MCF 10A (cell line): ENCODE measurements at regions of chr2 and their contacts with region 1.

Region 1: DNA sequence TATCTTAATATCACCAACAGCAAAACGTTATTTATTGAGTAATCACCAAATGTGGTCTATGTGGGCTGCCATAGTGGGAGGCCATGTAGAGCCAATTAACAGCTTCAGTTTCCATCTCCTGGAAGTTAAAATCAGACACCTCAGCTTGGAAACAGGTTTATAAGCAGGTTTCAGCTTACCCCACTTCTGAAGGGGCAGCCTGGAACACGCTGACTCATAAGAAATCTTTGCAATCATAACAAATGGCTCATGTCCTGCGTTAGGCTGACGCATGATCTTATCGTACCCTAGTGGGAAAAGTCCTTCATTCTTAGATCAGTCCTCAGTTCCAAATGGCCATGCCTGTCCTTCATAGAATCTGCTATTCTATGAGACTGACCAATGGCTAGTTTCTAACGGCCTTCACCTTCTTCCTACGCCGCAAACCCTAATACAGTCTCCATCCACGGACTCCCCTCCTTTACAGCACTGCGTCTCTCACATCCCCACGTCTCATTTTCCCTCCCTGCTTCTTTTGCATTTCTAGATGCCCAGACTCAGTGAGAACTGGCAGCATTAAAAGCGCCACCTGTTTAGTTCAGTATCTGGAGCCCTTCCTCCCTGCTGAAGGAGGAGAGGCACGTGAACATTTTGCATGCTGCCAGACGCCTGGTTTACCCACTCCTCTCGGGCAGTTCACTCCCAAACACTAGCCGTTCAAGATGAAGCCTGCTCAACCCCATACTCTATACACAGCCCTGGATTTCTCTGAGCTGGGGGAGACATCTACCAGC is 24.2 kb upstream of the BZW1 start:
- DNase-seq: peak; percentile 93
- H3K4me3 Mint-ChIP-seq: peak overlapping the region; percentile 10
- H3K27ac Mint-ChIP-seq: peak overlapping the region; percentile 89
- H3K4me1 Mint-ChIP-seq: peaks cover 19% of the 10 kb centered on the region
- H3K27me3 Mint-ChIP-seq: no peaks in the 10 kb centered on the region
- CTCF ChIP-seq: no peak

Region 2: GRCh38 chr2:200471324-200471848 is 316.1 kb before region 1 on chr2:
- CTCF ChIA-PET with region 1: no interaction called
- POLR2A ChIA-PET with region 1: no interaction called
- intact Hi-C with region 1: no loop called
- DNase-seq: peak; percentile 36
- H3K4me3 Mint-ChIP-seq: no peak overlapping the region
- H3K27ac Mint-ChIP-seq: peak overlapping the region; percentile 11
- H3K4me1 Mint-ChIP-seq: no peaks in the 10 kb centered on the region
- H3K27me3 Mint-ChIP-seq: no peaks in the 10 kb centered on the region
- CTCF ChIP-seq: peak; percentile 45

Region 3: DNA sequence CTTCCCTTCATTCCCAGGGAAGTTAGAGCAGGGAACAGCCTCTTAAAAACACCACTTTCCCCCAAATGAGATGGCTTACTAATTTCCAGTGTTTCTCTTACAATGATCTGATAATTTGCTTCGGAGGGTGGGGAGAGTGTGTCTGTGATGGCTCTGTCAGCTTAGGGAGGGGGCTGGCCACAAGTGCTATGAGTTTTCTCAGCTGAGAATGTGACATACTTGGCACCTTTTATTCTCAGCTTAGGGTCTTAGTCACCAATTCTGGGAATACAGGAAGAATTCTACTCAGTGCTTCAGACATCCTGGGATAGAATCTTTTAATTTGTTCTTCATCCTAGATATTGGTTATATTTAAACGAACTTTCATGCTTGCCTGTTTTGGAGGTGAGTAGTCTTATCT is 137.3 kb before region 1 on chr2:
- CTCF ChIA-PET with region 1: no interaction called
- POLR2A ChIA-PET with region 1: no interaction called
- intact Hi-C with region 1: no loop called
- DNase-seq: no peak
- H3K4me3 Mint-ChIP-seq: no peak overlapping the region
- H3K27ac Mint-ChIP-seq: no peak overlapping the region
- H3K4me1 Mint-ChIP-seq: no peaks in the 10 kb centered on the region
- H3K27me3 Mint-ChIP-seq: no peaks in the 10 kb centered on the region
- CTCF ChIP-seq: no peak

Region 4: DNA sequence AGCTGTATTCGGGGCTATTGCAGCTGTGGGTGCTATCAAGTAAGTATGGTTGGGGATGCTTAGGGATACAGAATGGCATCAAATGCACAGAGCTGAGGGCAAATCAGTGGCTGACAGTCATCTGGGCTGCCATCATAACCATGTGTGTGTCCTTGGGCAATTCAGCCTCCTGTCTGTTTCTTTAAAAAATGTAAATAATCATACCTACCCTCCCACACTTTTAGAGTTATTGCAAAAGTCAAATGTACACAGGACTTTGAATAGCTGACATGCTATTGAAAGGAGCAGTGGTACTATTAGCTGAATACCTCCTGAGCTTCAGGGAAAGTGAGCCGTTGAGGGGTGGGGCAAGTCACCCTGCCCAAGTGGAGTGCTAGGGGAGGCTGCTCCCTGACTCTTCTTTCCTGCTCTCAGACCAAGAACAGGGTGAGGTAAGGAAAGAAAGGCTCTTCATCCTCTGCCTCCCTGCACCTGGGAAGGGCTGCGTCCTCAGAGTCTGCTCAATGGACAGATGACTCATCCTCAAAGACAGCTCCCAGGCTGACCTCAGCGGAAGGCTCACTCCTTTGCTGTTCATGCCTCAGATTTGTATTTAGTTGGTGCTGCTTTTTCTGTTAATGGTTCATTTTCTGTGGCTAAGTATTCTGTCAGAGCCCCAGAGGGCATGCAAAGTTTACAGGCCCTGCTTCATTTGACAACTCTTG is 30.8 kb before region 1 on chr2:
- CTCF ChIA-PET with region 1: interaction called, 3 read pairs
- POLR2A ChIA-PET with region 1: interaction called, 16 read pairs
- intact Hi-C with region 1: no loop called
- DNase-seq: peak; percentile 89
- H3K4me3 Mint-ChIP-seq: no peak overlapping the region
- H3K27ac Mint-ChIP-seq: peak overlapping the region; percentile 74
- H3K4me1 Mint-ChIP-seq: peaks cover 25% of the 10 kb centered on the region
- H3K27me3 Mint-ChIP-seq: no peaks in the 10 kb centered on the region
- CTCF ChIP-seq: no peak

Region 5: DNA sequence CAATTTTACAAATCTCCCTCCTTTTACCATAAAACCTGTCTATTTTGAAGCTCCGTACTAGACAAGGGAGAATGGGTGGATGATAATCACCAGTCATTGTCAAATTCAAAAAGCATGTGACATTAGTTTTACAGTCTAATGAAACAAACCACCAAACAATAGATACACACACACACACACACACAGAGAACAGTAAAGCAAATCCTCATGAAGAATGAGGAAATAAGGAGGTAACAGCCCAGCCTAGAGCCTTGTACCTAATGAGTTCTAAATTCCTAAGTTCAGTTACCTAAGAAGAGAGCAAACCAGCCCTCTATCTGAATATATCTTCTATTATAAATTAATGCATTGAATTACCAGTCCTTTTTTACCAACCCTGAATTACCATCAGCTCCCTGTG is 12.6 kb before region 1 on chr2:
- CTCF ChIA-PET with region 1: interaction called, 3 read pairs
- POLR2A ChIA-PET with region 1: interaction called, 15 read pairs
- intact Hi-C with region 1: no loop called
- DNase-seq: no peak
- H3K4me3 Mint-ChIP-seq: no peak overlapping the region
- H3K27ac Mint-ChIP-seq: no peak overlapping the region
- H3K4me1 Mint-ChIP-seq: no peaks in the 10 kb centered on the region
- H3K27me3 Mint-ChIP-seq: no peaks in the 10 kb centered on the region
- CTCF ChIP-seq: no peak

Region 6: GRCh38 chr2:200852605-200853004 is 65.1 kb after region 1 on chr2:
- CTCF ChIA-PET with region 1: no interaction called
- POLR2A ChIA-PET with region 1: no interaction called
- intact Hi-C with region 1: no loop called
- DNase-seq: no peak
- H3K4me3 Mint-ChIP-seq: no peak overlapping the region
- H3K27ac Mint-ChIP-seq: no peak overlapping the region
- H3K4me1 Mint-ChIP-seq: no peaks in the 10 kb centered on the region
- H3K27me3 Mint-ChIP-seq: no peaks in the 10 kb centered on the region
- CTCF ChIP-seq: no peak

Region 7: DNA sequence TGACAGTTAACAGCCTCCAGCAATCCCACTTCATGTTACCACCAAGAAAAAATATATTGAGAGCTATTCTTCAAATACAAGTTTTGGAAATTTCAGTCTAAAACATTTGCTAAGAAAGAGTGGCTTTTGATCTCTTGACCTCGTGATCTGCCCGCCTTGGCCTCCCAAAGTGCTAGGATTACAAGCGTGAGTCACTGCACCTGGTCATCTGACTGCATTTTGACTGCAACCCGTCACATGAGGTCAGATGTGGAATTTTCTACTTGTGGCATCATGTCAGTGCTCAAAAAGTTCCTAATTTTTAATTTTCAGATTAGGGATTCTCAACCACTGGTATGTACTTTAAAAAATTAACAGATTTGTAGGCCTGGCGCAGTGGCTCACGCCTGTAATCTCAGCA is 86.0 kb after region 1 on chr2:
- CTCF ChIA-PET with region 1: no interaction called
- POLR2A ChIA-PET with region 1: no interaction called
- intact Hi-C with region 1: no loop called
- DNase-seq: no peak
- H3K4me3 Mint-ChIP-seq: no peak overlapping the region
- H3K27ac Mint-ChIP-seq: no peak overlapping the region
- H3K4me1 Mint-ChIP-seq: no peaks in the 10 kb centered on the region
- H3K27me3 Mint-ChIP-seq: no peaks in the 10 kb centered on the region
- CTCF ChIP-seq: no peak